CD8-positive, alpha-beta T cell (primary cell): ENCODE measurements at regions of chr7 and their contacts with region 1.

Region 1: GRCh38 chr7:44587843-44588711 is 6.0 kb upstream of the TMED4 start:
- DNase-seq: peak; percentile 34 to 79 (median 63)
- ATAC-seq: peak; percentile 81
- H3K4me3 ChIP-seq: no peak overlapping the region
- H3K4me3 Mint-ChIP-seq: no peak overlapping the region
- H3K27ac ChIP-seq: no peak overlapping the region
- H3K27ac Mint-ChIP-seq: no peak overlapping the region
- H3K4me1 ChIP-seq: no peaks in the 10 kb centered on the region
- H3K4me1 Mint-ChIP-seq: peaks cover 6% of the 10 kb centered on the region
- H3K27me3 ChIP-seq: no peaks in the 10 kb centered on the region
- H3K27me3 Mint-ChIP-seq: no peaks in the 10 kb centered on the region
- CTCF ChIP-seq: peak; percentile 68

Region 2: DNA sequence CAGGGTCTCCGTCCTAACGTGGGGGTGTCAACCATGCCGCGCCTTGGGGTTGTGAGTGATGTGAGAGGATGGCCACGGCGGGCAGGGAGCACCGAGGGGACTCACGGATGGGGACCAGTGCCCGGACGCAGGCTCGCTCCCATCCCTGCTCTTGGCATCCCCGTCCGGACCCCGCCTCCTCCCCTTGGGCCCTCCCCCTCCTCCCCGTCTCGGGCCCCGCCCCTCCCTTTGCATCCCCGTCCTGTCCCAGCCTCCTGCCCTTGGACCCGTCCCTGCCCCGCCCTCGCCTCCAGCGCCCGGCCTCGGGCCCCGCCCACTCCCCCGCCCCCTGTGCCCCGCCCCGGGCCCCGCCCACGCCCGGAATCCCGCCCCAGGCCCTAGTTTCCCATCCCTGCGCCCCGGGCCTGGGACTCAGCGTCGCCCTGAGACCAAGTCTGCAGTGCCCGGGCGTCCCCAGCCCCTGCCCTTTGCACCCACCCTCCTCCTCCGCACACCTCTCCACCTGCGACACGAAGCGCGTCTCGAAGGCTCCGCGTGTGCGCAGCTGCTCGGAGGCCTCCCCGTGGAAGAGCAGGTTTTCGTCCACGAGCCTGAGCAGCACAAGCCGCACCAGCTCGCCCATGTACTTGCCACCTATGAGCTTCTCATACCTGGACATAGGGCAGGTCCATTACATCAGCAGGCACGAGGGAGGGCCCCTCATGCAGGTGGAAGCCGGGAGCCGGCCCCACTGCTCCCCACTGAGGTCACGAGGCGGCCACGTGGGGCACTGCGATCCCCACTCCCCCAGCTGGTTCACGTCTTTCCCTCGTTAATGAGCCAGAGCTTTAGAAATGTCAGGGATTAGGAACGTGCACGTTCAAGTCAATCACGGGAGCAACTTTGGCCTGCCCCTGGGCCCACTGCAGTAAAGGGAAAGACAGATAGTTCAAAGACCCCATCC is 441.8 kb before region 1 on chr7:
- CTCF ChIA-PET with region 1: no interaction called
- POLR2A ChIA-PET with region 1: no interaction called
- intact Hi-C with region 1: no loop called
- DNase-seq: peak in 8 of 9 experiments; percentile 10 to 74 (median 64)
- ATAC-seq: peak; percentile 61
- H3K4me3 ChIP-seq: peak overlapping the region; percentile 51 to 70
- H3K4me3 Mint-ChIP-seq: peak overlapping the region; percentile 81
- H3K27ac ChIP-seq: no peak overlapping the region
- H3K27ac Mint-ChIP-seq: peak overlapping the region; percentile 82
- H3K4me1 ChIP-seq: peaks cover 8% of the 10 kb centered on the region
- H3K4me1 Mint-ChIP-seq: peaks cover 10% of the 10 kb centered on the region
- H3K27me3 ChIP-seq: peaks cover 0 to 9% of the 10 kb centered on the region in 2 experiments
- H3K27me3 Mint-ChIP-seq: peaks cover 2% of the 10 kb centered on the region
- CTCF ChIP-seq: no peak

Region 3: GRCh38 chr7:44508328-44509030 is 79.6 kb before region 1 on chr7:
- CTCF ChIA-PET with region 1: no interaction called
- POLR2A ChIA-PET with region 1: no interaction called
- intact Hi-C with region 1: no loop called
- DNase-seq: no peak
- ATAC-seq: no peak
- H3K4me3 ChIP-seq: no peak overlapping the region
- H3K4me3 Mint-ChIP-seq: no peak overlapping the region
- H3K27ac ChIP-seq: no peak overlapping the region
- H3K27ac Mint-ChIP-seq: no peak overlapping the region
- H3K4me1 ChIP-seq: no peaks in the 10 kb centered on the region
- H3K4me1 Mint-ChIP-seq: no peaks in the 10 kb centered on the region
- H3K27me3 ChIP-seq: no peaks in the 10 kb centered on the region
- H3K27me3 Mint-ChIP-seq: peaks cover 14% of the 10 kb centered on the region
- CTCF ChIP-seq: no peak

Region 4: DNA sequence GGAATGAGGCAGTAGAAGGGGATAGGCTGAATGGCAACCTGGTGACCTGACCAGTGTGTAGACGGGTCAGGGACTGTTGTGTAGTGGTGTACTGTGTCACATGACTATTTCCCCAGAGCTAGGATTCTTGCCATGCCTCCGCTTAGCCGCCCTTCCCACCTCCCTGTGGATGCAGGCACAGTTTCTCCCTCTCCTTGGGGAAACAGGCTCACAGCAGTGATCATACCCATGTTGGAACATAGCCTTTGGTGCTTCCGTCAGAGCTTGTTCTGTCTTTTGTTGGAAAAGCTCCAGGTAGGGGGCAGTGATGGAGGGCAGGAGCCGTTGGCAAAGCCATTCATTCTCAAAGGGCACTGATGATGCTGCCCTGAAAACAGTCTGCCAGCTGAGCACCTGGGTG is 62.7 kb after region 1 on chr7:
- CTCF ChIA-PET with region 1: no interaction called
- POLR2A ChIA-PET with region 1: no interaction called
- intact Hi-C with region 1: loop called in 1 of 2 experiments (anchors 5 kb)
- DNase-seq: no peak
- ATAC-seq: no peak
- H3K4me3 ChIP-seq: no peak overlapping the region
- H3K4me3 Mint-ChIP-seq: no peak overlapping the region
- H3K27ac ChIP-seq: no peak overlapping the region
- H3K27ac Mint-ChIP-seq: no peak overlapping the region
- H3K4me1 ChIP-seq: no peaks in the 10 kb centered on the region
- H3K4me1 Mint-ChIP-seq: no peaks in the 10 kb centered on the region
- H3K27me3 ChIP-seq: no peaks in the 10 kb centered on the region
- H3K27me3 Mint-ChIP-seq: no peaks in the 10 kb centered on the region
- CTCF ChIP-seq: no peak

Region 5: DNA sequence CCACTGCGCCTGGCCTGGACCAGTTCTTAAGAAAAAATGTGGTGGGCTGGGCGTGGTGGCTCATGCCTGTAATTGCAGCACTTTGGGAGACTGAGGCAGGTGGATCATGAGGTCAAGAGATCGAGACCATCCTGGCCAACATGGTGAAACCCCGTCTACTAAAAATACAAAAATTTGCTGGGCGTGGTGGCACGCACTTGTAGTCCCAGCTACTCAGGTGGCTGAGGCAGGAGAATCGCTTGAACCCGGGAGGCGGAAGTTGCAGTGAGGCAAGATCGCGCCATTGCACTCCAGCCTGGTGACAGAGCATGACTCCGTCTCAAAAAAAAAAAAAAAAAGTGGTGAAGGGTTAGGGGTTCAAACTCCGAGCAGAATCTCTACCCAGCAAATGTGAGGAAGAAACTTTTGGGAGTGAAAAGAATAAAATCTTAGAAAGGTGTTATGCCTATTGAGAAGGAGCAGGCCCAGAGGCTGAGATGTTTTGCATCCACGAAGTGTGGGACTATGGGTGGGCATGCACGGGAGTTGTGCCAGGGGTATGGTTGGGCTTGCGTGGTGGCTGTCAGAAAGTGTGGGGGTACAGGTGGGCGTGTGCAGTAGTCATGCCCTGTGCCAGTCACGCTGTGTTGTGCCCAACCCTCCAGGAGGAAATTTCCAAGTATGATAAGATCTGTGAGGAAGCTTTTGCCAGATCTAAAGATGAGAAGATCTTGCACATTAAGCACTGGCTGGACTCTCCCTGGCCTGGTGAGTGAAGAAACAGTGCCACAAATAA is 107.5 kb after region 1 on chr7:
- CTCF ChIA-PET with region 1: no interaction called
- POLR2A ChIA-PET with region 1: no interaction called
- intact Hi-C with region 1: no loop called
- DNase-seq: no peak
- ATAC-seq: no peak
- H3K4me3 ChIP-seq: no peak overlapping the region
- H3K4me3 Mint-ChIP-seq: no peak overlapping the region
- H3K27ac ChIP-seq: no peak overlapping the region
- H3K27ac Mint-ChIP-seq: no peak overlapping the region
- H3K4me1 ChIP-seq: no peaks in the 10 kb centered on the region
- H3K4me1 Mint-ChIP-seq: no peaks in the 10 kb centered on the region
- H3K27me3 ChIP-seq: no peaks in the 10 kb centered on the region
- H3K27me3 Mint-ChIP-seq: no peaks in the 10 kb centered on the region
- CTCF ChIP-seq: no peak

Region 6: GRCh38 chr7:44921607-44922359 is 333.7 kb after region 1 on chr7:
- CTCF ChIA-PET with region 1: interaction called, 3 read pairs
- POLR2A ChIA-PET with region 1: no interaction called
- intact Hi-C with region 1: loop called (anchors 1 kb)
- DNase-seq: peak; percentile 88 to 99 (median 92)
- ATAC-seq: peak; percentile 94
- H3K4me3 ChIP-seq: no peak overlapping the region
- H3K4me3 Mint-ChIP-seq: no peak overlapping the region
- H3K27ac ChIP-seq: no peak overlapping the region
- H3K27ac Mint-ChIP-seq: no peak overlapping the region
- H3K4me1 ChIP-seq: no peaks in the 10 kb centered on the region
- H3K4me1 Mint-ChIP-seq: peaks cover 5% of the 10 kb centered on the region
- H3K27me3 ChIP-seq: peaks cover 0 to 2% of the 10 kb centered on the region in 2 experiments
- H3K27me3 Mint-ChIP-seq: peaks cover under 1% of the 10 kb centered on the region
- CTCF ChIP-seq: peak; percentile 87